T-cell (primary cell): ENCODE measurements at regions of chr9 and their contacts with region 1.

Region 1: DNA sequence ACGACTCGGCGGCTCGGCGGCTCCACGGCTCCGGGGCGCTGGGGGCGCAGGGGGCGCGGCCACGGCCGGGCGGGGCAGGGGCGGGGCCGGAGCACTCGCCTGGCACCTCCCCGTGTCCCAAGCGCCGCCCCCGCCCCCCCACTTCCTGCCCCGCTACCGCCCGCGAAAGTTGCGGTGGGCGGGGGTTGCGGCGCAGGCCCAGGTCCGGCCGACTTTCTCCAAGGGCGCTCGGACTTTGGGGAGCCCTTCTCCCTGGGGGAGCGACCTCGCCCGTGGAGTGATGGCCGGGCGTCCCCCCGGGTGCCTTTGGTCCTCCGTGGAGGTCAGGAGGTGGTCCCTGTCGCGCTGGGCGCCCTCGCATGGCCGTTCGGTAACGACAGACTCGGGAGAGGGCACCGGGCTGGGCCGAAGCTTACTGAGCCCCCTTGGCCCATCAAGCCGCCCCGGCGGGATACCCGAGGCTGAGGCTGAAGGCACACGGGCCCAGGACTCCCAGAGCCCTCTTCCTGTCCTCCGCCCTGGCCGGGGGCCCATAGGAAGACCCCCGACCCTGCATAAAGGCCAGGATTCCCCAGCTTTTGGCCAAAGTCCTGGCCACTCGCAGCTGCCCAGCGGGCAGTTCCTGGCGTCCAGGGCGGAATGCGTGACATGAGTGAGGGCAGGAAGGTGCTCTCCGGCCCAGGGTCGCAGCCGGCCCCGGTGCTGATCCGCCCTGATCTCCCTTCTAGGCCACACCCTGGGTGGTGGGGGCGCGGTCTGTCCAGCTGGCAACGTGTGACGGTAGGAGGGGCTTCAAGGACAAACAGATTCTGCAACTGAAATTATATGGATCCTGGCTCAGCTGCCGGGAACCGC is 883 bp upstream of the VAV2 start:
- DNase-seq: peak; percentile 33 to 86 (median 65)
- ATAC-seq: peak; percentile 85 to 89 (median 88)
- H3K4me3 ChIP-seq: peak overlapping the region; percentile 74 to 84
- H3K4me3 Mint-ChIP-seq: peak overlapping the region; percentile 68 to 79 (median 69)
- H3K27ac ChIP-seq: no peak overlapping the region
- H3K27ac Mint-ChIP-seq: no peak overlapping the region
- H3K4me1 ChIP-seq: peaks cover 0 to 28% of the 10 kb centered on the region in 2 experiments
- H3K4me1 Mint-ChIP-seq: peaks cover 0 to 12% (median 9%) of the 10 kb centered on the region in 3 donors
- H3K27me3 ChIP-seq: peaks cover 0 to 49% of the 10 kb centered on the region in 2 experiments
- H3K27me3 Mint-ChIP-seq: peaks cover 0 to 8% of the 10 kb centered on the region in 2 donors

Region 2: GRCh38 chr9:133782157-133783130 is 210.6 kb before region 1 on chr9:
- CTCF ChIA-PET with region 1: interaction called, 10 to 21 read pairs
- POLR2A ChIA-PET with region 1: no interaction called
- DNase-seq: peak in 34 of 35 experiments; percentile 22 to 79 (median 55)
- ATAC-seq: peak in 3 of 4 experiments; percentile 53 to 67 (median 58)
- H3K4me3 ChIP-seq: no peak overlapping the region
- H3K4me3 Mint-ChIP-seq: no peak overlapping the region
- H3K27ac ChIP-seq: no peak overlapping the region
- H3K27ac Mint-ChIP-seq: no peak overlapping the region
- H3K4me1 ChIP-seq: no peaks in the 10 kb centered on the region
- H3K4me1 Mint-ChIP-seq: peaks cover 0 to 5% (median 0%) of the 10 kb centered on the region in 3 donors
- H3K27me3 ChIP-seq: no peaks in the 10 kb centered on the region
- H3K27me3 Mint-ChIP-seq: no peaks in the 10 kb centered on the region

Region 3: DNA sequence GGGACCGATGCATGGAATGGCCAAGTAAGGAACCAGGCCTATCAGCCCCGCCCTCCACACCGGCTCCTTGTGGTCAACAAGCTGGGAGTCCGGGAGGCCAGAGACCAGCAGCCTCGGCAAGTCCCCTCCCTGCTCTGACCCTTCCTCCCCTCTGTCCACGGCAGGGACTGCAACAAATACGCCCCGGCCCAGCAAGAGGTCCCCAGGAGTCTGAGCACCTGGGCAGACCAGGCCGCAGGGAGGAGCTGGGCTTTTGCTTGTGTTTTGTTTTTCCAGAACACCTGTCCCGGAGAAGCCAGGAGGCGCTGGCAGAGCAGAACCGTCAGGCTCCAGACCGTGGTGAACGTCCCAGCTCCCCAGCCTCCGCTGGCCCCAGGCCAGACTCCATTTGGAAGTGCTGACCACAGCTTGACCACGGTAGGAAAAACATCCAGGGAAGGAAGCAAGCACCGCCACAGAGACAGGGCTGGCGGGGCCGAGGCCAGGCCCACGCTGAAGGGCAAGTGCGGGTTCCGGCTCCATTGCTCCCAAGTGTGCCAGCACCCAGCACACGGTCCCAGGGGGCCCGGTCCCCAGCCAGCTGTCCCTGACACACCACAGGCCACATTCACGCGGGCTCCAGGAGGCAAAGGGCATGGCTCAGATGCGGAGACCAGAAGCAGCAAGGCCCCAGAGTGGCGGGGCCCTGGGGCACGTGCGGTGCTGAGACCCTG is 57.5 kb before region 1 on chr9:
- CTCF ChIA-PET with region 1: no interaction called
- POLR2A ChIA-PET with region 1: no interaction called
- DNase-seq: no peak
- ATAC-seq: no peak
- H3K4me3 ChIP-seq: no peak overlapping the region
- H3K4me3 Mint-ChIP-seq: no peak overlapping the region
- H3K27ac ChIP-seq: no peak overlapping the region
- H3K27ac Mint-ChIP-seq: no peak overlapping the region
- H3K4me1 ChIP-seq: no peaks in the 10 kb centered on the region
- H3K4me1 Mint-ChIP-seq: no peaks in the 10 kb centered on the region
- H3K27me3 ChIP-seq: no peaks in the 10 kb centered on the region
- H3K27me3 Mint-ChIP-seq: no peaks in the 10 kb centered on the region

Region 4: DNA sequence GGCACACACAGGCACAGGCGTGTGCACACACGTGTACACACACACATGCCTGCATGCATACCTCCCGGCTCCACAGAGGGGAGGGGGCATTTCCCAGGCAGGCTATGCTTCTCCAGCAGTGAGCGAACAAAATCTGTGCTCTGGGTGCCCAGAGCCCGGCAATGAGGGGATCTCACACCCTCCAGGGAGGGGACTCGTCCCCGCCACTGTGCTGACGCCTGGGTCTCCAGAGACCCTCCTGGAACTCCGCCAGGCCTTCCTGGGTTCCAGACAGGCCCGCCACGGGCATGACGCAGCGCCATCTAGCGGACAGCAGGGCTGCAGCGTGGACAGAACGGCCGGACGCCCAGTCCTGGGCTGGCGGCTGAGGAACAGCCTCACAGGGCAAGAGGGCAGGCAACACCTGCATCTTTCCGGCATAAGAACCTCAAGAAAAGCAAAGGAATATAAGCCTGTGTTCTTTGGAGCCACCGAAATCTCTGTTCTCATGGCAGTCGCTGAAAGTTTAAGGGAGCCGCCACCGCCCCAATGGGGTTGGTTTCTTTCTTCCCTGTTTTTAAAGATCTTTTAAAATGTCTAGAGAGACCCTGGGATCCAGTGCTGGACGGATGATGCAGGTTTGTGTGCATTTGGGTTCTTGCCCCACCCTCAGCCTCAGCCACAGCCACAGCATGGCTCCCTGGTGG is 1351.0 kb after region 1 on chr9:
- CTCF ChIA-PET with region 1: no interaction called
- POLR2A ChIA-PET with region 1: no interaction called
- DNase-seq: peak in 21 of 35 experiments; percentile 3 to 55 (median 21)
- ATAC-seq: peak in 3 of 4 experiments; percentile 33 to 60 (median 47)
- H3K4me3 ChIP-seq: no peak overlapping the region
- H3K4me3 Mint-ChIP-seq: no peak overlapping the region
- H3K27ac ChIP-seq: no peak overlapping the region
- H3K27ac Mint-ChIP-seq: no peak overlapping the region
- H3K4me1 ChIP-seq: no peaks in the 10 kb centered on the region
- H3K4me1 Mint-ChIP-seq: no peaks in the 10 kb centered on the region
- H3K27me3 ChIP-seq: peaks cover 2 to 54% of the 10 kb centered on the region in 2 experiments
- H3K27me3 Mint-ChIP-seq: peaks cover 16 to 24% of the 10 kb centered on the region in 2 donors